Calu3 (cell line): ENCODE measurements at regions of chr3 and their contacts with region 1.

Region 1: DNA sequence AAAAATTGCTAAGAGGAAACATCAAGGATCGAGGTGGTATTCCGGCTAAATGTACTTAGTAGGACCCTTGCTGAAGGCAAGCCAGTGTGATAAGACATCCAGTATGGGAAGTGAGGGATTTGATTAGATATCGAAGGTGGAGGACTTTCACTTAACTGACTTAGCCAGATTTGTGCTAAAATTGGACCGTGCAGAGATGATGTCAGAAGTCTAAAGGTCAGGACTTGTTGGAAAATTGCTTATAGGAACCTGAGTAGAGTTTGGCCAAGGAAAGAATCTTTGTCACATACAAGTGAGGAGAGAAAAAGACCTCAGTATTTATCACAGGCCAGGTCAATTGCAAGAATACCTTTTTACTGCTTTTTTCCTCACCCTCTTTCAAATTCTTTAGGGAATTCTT is 30.9 kb upstream of the PYDC2 start:
- DNase-seq: no peak
- H3K4me3 Mint-ChIP-seq: peak overlapping the region; percentile 27
- H3K27ac Mint-ChIP-seq: peak overlapping the region; percentile 12
- H3K4me1 Mint-ChIP-seq: peaks cover 27% of the 10 kb centered on the region
- H3K27me3 Mint-ChIP-seq: no peaks in the 10 kb centered on the region
- CTCF ChIP-seq: no peak

Region 2: GRCh38 chr3:191869738-191870415 is 439.8 kb after region 1 on chr3:
- CTCF ChIA-PET with region 1: no interaction called
- intact Hi-C with region 1: no loop called
- DNase-seq: no peak
- H3K4me3 Mint-ChIP-seq: no peak overlapping the region
- H3K27ac Mint-ChIP-seq: no peak overlapping the region
- H3K4me1 Mint-ChIP-seq: no peaks in the 10 kb centered on the region
- H3K27me3 Mint-ChIP-seq: no peaks in the 10 kb centered on the region
- CTCF ChIP-seq: no peak

Region 3: GRCh38 chr3:191958980-191959671 is 529.0 kb after region 1 on chr3:
- CTCF ChIA-PET with region 1: no interaction called
- intact Hi-C with region 1: loop called (anchors 5 kb)
- DNase-seq: no peak
- H3K4me3 Mint-ChIP-seq: no peak overlapping the region
- H3K27ac Mint-ChIP-seq: peak overlapping the region; percentile 11
- H3K4me1 Mint-ChIP-seq: peaks cover 16% of the 10 kb centered on the region
- H3K27me3 Mint-ChIP-seq: no peaks in the 10 kb centered on the region
- CTCF ChIP-seq: no peak